ENCODE measurements at regions of chr7 and their contacts with region 1.

Region 1: DNA sequence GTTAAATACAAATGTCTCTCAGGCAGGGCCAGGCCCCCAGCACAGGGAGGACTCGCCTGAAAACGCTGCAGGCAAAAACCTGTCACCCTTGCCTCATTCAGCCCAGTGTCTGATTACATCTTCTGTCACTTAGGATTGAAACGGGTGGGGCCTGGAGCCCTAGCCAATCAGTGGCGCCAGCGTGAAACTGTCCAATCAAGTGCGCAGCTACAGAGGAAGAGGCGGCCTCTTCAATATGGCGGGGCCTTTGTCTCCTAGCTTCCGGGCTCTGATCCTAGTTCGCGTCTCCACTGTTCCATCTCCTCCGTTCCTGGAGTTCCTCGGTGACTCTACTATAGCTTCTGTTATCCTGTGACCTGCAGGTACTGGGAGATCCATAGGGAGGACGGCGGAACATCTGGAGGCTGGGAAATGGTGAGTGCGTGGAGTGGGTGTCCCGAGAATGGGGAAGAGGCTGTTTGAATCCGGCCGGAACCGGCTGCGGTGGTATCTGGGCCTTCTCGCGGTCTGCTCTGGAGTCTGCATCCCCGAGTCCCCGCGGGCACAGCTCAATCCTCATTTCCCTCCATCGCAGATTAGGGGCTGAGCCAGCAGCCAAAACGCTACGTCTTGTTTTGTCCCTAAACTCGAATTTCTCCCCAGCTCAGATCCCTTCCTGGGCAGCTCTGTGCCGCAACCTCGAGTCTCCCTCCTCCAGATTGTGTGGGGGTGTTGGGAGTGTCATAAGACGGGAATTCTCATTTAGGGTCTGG is at the start of gene ZNF736:
- DNase-seq: peak; percentile 76 to 95 (median 82)
- ATAC-seq: peak; percentile 100
- H3K4me3 ChIP-seq: peak within 1 kb of the TSS; percentile 99
- H3K4me3 Mint-ChIP-seq: peak within 1 kb of the TSS; percentile 96
- H3K27ac ChIP-seq: peak within 1 kb of the TSS in 1 of 2 donors; percentile 84
- H3K27ac Mint-ChIP-seq: peak within 1 kb of the TSS; percentile 93
- H3K4me1 ChIP-seq: peaks cover 23% of the 10 kb centered on the region
- H3K4me1 Mint-ChIP-seq: peaks cover 33% of the 10 kb centered on the region
- H3K27me3 ChIP-seq: no peaks in the 10 kb centered on the region
- H3K27me3 Mint-ChIP-seq: no peaks in the 10 kb centered on the region
- CTCF ChIP-seq: no peak
- total RNA-seq, gene ZNF736: 29.9 to 30.8 TPM

Region 2: GRCh38 chr7:63900394-63901203 is 413.3 kb before region 1 on chr7:
- CTCF ChIA-PET with region 1: no interaction called
- POLR2A ChIA-PET with region 1: interaction called, 6 read pairs
- intact Hi-C with region 1: loop called in 1 of 2 experiments (anchors 5 kb)
- DNase-seq: peak; percentile 79 to 96 (median 86)
- ATAC-seq: peak; percentile 93
- H3K4me3 ChIP-seq: peak overlapping the region; percentile 73
- H3K4me3 Mint-ChIP-seq: peak overlapping the region; percentile 99
- H3K27ac ChIP-seq: peak overlapping the region; percentile 55 to 87
- H3K27ac Mint-ChIP-seq: peak overlapping the region; percentile 84
- H3K4me1 ChIP-seq: peaks cover 19% of the 10 kb centered on the region
- H3K4me1 Mint-ChIP-seq: peaks cover 12% of the 10 kb centered on the region
- H3K27me3 ChIP-seq: no peaks in the 10 kb centered on the region
- H3K27me3 Mint-ChIP-seq: no peaks in the 10 kb centered on the region
- CTCF ChIP-seq: no peak

Region 3: DNA sequence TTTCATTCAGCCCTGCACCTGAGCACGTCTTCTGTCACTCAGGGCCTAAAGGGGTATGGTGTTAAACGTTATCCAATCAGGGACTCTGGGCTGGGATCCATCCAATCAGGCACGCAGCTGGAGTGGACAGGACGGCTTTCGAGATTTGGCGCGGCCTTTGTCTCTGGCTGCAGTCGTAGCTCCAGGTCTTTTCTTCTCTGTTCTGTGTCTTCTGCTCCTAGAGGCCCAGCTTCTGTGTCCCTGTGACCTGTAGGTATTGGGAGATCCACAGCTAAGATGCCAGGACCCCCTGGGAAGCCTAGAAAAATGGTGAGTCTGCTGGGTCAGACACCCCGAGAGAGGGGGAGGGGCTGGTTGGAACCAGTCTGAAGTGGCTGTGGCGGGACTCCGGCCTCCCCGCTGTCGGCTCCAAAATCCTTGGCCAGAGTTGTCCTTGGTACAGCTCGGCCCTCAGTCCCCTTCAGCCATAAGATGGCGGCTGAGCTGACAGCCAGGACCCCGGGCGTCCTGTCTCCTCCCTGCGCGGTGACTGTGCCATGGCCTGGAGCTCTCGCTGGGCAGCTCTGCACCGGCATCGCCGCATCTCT is 260.7 kb after region 1 on chr7:
- CTCF ChIA-PET with region 1: no interaction called
- POLR2A ChIA-PET with region 1: interaction called, 13 read pairs
- intact Hi-C with region 1: no loop called
- DNase-seq: no peak
- ATAC-seq: no peak
- H3K4me3 ChIP-seq: no peak overlapping the region
- H3K4me3 Mint-ChIP-seq: no peak overlapping the region
- H3K27ac ChIP-seq: no peak overlapping the region
- H3K27ac Mint-ChIP-seq: no peak overlapping the region
- H3K4me1 ChIP-seq: peaks cover 8% of the 10 kb centered on the region
- H3K4me1 Mint-ChIP-seq: peaks cover 6% of the 10 kb centered on the region
- H3K27me3 ChIP-seq: peaks cover 4 to 7% of the 10 kb centered on the region in 2 experiments
- H3K27me3 Mint-ChIP-seq: peaks cover 21% of the 10 kb centered on the region
- CTCF ChIP-seq: no peak

Region 4: GRCh38 chr7:65006094-65006992 is 692.4 kb after region 1 on chr7 and contains the start of gene ERV3-1:
- CTCF ChIA-PET with region 1: no interaction called
- POLR2A ChIA-PET with region 1: interaction called, 7 read pairs
- intact Hi-C with region 1: loop called (anchors 5 to 10 kb)
- DNase-seq: peak; percentile 84 to 97 (median 90)
- ATAC-seq: peak; percentile 99
- H3K4me3 ChIP-seq: peak within 1 kb of the TSS; percentile 75
- H3K4me3 Mint-ChIP-seq: peak within 1 kb of the TSS; percentile 96
- H3K27ac ChIP-seq: peak within 1 kb of the TSS; percentile 49
- H3K27ac Mint-ChIP-seq: peak within 1 kb of the TSS; percentile 88
- H3K4me1 ChIP-seq: peaks cover 21% of the 10 kb centered on the region
- H3K4me1 Mint-ChIP-seq: peaks cover 45% of the 10 kb centered on the region
- H3K27me3 ChIP-seq: no peaks in the 10 kb centered on the region
- H3K27me3 Mint-ChIP-seq: no peaks in the 10 kb centered on the region
- CTCF ChIP-seq: no peak
- total RNA-seq, gene ERV3-1: 16.6 to 17.2 TPM

Region 5: DNA sequence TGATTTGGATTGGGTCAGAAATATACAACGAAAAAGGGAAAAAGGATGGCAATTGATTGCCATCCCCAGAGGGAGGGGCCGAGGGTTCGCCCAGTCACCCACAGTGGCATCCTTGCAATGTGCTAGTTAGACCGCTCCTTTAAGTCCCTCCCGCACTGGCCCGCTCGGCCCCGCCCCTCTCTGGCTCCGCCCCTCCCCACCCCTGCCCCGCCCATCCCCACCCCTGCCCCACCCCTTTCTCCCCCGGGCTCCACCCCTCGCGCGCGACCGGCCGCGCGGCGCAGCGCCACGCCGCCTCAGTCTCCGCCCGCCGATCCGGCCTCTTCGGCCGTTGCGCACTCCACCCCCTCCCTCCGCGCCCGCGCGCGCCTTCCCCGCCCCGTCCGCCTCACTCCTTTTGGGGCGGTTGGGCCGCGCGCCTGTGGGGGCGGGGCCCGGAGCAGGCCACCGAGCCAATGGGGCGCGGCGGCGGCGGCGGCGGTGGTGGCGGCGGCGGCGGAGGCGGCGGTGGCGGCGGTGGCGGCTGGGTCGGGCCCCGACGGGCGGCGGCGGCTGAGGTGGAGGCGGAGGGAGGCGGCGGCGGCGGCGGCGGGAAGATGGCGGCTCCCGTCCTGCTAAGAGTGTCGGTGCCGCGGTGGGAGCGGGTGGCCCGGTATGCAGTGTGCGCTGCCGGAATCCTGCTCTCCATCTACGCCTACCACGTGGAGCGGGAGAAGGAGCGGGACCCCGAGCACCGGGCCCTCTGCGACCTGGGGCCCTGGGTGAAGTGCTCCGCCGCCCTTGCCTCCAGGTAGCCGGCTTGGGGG is 1559.1 kb after region 1 on chr7 and contains the start of gene VKORC1L1:
- CTCF ChIA-PET with region 1: no interaction called
- POLR2A ChIA-PET with region 1: no interaction called
- intact Hi-C with region 1: loop called in 1 of 2 experiments (anchors 10 kb)
- DNase-seq: peak; percentile 89 to 97 (median 96)
- ATAC-seq: peak; percentile 87
- H3K4me3 ChIP-seq: peak within 1 kb of the TSS; percentile 68
- H3K4me3 Mint-ChIP-seq: peak within 1 kb of the TSS; percentile 91
- H3K27ac ChIP-seq: no peak within 1 kb of the TSS
- H3K27ac Mint-ChIP-seq: peak within 1 kb of the TSS; percentile 80
- H3K4me1 ChIP-seq: peaks cover 13% of the 10 kb centered on the region
- H3K4me1 Mint-ChIP-seq: peaks cover 12% of the 10 kb centered on the region
- H3K27me3 ChIP-seq: no peaks in the 10 kb centered on the region
- H3K27me3 Mint-ChIP-seq: no peaks in the 10 kb centered on the region
- CTCF ChIP-seq: no peak
- total RNA-seq, gene VKORC1L1: 1.9 to 3.0 TPM

Measured in CD4-positive, alpha-beta T cell (primary cell).